PC-3 (cell line): ENCODE measurements at regions of chr11 and their contacts with region 1.

Region 1: DNA sequence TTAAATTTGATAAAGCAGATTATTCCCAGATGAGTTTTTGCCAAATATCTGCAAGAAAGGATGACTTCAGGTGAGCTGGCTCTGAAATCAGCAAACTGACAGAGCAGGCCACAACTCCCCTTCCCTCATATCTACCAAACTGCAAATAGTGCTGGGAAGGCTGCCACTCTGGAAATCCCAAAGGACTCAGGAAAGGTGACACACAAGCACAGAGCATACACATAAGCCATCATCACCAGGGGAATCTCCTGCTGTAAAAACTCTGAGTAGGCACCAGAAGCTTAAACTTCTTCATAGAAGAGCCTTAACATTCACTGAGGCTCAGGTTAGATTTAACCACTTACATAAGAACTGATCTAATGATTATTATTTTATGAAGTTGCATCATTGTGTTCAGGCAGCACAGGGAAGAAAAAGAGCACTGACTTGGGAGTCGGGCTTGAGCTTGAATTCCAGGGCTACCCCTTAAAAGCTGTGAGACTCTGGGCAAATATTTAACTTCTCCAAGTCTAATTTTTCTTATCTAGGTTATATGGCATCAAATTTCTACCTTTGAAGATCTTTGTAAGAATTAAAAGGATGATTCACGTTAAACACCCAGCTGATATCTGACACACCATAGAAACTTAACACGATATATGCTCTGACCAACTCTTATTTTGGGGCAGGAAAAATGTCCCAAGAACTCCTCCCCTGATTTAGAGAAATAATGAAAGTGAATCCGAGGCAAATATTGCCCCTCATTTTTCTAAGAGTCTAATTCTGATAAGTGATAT is 15.0 kb downstream of the SYTL2 start:
- DNase-seq: peak; percentile 70
- ATAC-seq: peak; percentile 73
- H3K4me3 ChIP-seq: peak overlapping the region; percentile 42; the same call in 1 of the 2 replicates
- H3K27ac ChIP-seq: peak overlapping the region; percentile 78
- H3K4me1 ChIP-seq: peaks cover 49% of the 10 kb centered on the region
- H3K27me3 ChIP-seq: no peaks in the 10 kb centered on the region
- CTCF ChIP-seq: no peak

Region 2: DNA sequence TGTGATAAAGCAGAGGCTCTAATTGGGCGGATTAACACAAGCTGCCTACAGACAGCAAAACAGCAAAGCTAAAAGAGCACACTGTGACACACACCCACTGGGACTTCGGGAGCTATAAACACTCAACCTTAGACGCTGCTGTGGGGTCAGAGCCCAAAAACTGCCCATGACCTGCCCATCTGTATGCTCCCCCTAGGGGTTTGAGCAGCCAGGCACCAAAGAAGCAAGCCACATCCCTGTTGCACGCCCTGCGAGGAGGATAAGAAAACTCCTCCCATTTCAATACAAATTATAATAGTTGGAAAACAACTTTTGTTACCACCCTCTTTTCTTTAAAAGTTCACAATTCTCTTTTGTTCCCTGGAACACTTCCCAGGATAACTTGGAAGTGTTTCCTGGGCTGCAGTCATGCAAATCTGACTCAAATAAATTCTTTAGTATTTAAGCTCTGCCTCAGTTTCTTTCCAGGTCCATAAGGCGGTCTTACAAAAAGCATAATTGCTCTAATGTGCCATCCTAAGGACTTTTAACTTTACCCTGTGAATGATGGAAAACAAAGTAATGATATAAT is 255.2 kb before region 1 on chr11:
- CTCF ChIA-PET with region 1: no interaction called
- POLR2A ChIA-PET with region 1: no interaction called
- intact Hi-C with region 1: no loop called
- DNase-seq: no peak
- ATAC-seq: no peak
- H3K4me3 ChIP-seq: no peak overlapping the region
- H3K27ac ChIP-seq: no peak overlapping the region
- H3K4me1 ChIP-seq: no peaks in the 10 kb centered on the region
- H3K27me3 ChIP-seq: peaks cover 9% of the 10 kb centered on the region; the same call in 1 of the 2 replicates
- CTCF ChIP-seq: no peak; the same call in 1 of the 2 replicates

Region 3: DNA sequence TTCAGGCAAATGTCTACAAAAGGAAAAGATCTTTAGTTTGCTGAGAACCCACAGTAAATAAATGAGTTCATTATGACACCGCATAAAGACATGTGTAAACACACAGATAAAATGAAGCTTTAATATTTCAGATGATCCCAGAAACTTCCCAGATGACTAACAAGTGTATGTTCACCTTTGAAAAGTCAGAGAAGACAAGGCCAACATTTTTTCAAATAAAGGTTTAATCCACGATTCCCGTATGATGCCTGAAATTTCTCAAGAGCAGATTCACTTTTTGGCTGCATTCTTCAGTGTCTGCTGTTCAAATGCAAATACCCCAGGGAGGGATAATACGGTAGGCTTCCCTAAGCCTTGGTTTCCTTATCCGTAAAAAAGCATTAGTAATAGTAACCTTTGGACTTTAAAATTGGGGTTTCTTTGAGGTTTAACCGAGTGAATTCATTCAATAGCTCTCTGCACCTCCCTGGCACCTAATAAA is 47.4 kb before region 1 on chr11:
- CTCF ChIA-PET with region 1: no interaction called
- POLR2A ChIA-PET with region 1: no interaction called
- intact Hi-C with region 1: loop called (anchors 2 kb)
- DNase-seq: peak; percentile 90
- ATAC-seq: peak; percentile 84
- H3K4me3 ChIP-seq: peak overlapping the region; percentile 32
- H3K27ac ChIP-seq: peak overlapping the region; percentile 92
- H3K4me1 ChIP-seq: peaks cover 57% of the 10 kb centered on the region
- H3K27me3 ChIP-seq: no peaks in the 10 kb centered on the region
- CTCF ChIP-seq: no peak